Cardiac septum (tissue), 1 donor: ENCODE measurements at regions of chr17 and their contacts with region 1.

Region 1: GRCh38 chr17:58447039-58447975 is 30.0 kb upstream of the RNF43 start:
- DNase-seq: peak; percentile 78

Region 2: DNA sequence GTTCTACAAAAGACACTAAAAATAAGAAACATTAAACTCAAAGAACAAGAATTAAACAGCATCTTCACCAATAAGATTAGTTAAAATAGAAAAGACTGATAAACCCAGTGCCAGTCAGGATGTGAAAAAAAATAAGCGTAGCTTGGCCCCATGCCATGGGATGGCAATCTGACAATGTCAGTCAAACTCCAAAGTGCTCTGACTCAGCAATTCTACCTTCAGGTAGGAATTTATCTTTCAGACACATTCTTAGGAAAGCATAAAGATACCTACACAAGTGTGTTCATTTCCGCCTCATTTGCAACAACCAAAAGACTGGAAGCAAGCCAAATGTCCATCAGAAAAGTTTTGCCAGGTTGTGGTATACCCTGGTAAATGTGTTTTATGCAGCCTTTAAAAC is 157.4 kb before region 1 on chr17:
- intact Hi-C with region 1: no loop called
- DNase-seq: no peak

Region 3: GRCh38 chr17:58317421-58318064 is 129.8 kb before region 1 on chr17:
- intact Hi-C with region 1: loop called (anchors 1 kb)
- DNase-seq: peak; percentile 76

Region 4: GRCh38 chr17:58337600-58338453 is 109.5 kb before region 1 on chr17:
- intact Hi-C with region 1: no loop called
- DNase-seq: peak; percentile 94

Region 5: GRCh38 chr17:58487589-58488427 is 40.5 kb after region 1 on chr17 and contains the start of gene HSF5:
- intact Hi-C with region 1: no loop called
- DNase-seq: no peak
- total RNA-seq, gene HSF5: not detected